Breast epithelium (tissue), 4 donors: ENCODE measurements at regions of chr1 and their contacts with region 1.

Region 1: GRCh38 chr1:6259491-6260425 is 1.1 kb downstream of the GPR153 start:
- DNase-seq: peak; percentile 77 to 82
- H3K4me3 ChIP-seq: peak overlapping the region; percentile 64 to 83 (median 64)
- H3K27ac ChIP-seq: peak overlapping the region; percentile 21 to 78
- H3K4me1 ChIP-seq: peaks cover 0 to 5% of the 10 kb centered on the region in 2 donors
- H3K27me3 ChIP-seq: no peaks in the 10 kb centered on the region
- CTCF ChIP-seq: no peak
- POLR2A ChIP-seq: no peak

Region 2: GRCh38 chr1:5522531-5523145 is 737.1 kb before region 1 on chr1:
- intact Hi-C with region 1: loop called (anchors 10 kb)
- DNase-seq: no peak
- H3K4me3 ChIP-seq: no peak overlapping the region
- H3K27ac ChIP-seq: no peak overlapping the region
- H3K4me1 ChIP-seq: no peaks in the 10 kb centered on the region
- H3K27me3 ChIP-seq: peaks cover 0 to 6% of the 10 kb centered on the region in 2 donors
- CTCF ChIP-seq: no peak
- POLR2A ChIP-seq: no peak

Region 3: GRCh38 chr1:6367381-6368012 is 107.7 kb after region 1 on chr1:
- intact Hi-C with region 1: no loop called
- DNase-seq: peak in 1 of 2 donors; percentile 62
- H3K4me3 ChIP-seq: no peak overlapping the region
- H3K27ac ChIP-seq: peak overlapping the region in 1 of 2 donors; percentile 43
- H3K4me1 ChIP-seq: no peaks in the 10 kb centered on the region
- H3K27me3 ChIP-seq: no peaks in the 10 kb centered on the region
- CTCF ChIP-seq: no peak
- POLR2A ChIP-seq: no peak

Region 4: DNA sequence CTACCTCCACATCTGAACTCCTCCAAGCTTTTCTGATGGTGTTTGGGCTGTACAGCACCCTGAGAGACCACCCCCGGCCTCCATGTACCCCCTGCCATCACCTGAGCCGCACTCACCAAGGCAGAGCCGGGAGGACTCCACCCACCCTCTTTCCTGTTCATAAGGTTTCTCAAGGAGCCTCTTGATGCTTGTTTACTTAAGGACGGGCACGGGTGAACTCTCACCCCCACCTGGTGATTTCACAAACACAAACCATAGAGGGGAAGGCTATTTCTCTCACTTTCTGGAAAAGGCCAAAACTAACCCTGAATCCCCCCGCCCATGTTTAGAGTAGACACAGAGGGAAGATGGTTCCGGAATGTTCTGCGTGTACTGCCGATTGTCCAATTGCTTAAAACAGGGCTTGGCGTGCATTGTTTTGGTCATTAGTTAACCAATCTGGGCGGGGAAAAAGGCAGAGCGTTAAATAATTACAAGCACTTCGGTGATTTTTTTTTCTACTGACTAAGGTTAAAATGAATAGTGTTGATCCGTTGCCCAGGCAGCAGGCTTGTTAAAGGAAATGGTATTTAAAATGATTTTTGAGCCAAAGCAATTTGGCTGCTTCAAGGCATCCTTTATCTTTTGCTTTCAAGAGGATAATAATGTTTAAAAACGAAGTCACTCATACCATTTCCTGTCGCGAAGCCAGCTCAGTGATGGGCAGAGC is 1231.5 kb after region 1 on chr1:
- intact Hi-C with region 1: loop called (anchors 10 kb)
- DNase-seq: no peak
- H3K4me3 ChIP-seq: peak overlapping the region in 1 of 3 donors; percentile 37
- H3K27ac ChIP-seq: peak overlapping the region; percentile 52 to 78
- H3K4me1 ChIP-seq: no peaks in the 10 kb centered on the region
- H3K27me3 ChIP-seq: no peaks in the 10 kb centered on the region
- CTCF ChIP-seq: no peak
- POLR2A ChIP-seq: no peak